Activated naive CD4-positive, alpha-beta T cell treated with anti-CD3 and anti-CD28 coated beads, Interleukin-2, amount 10 ng/mL, durations not matched to agents 7 days and 5 days (primary cell): ENCODE measurements at regions of chr5 and their contacts with region 1.

Region 1: GRCh38 chr5:151164686-151165392 is 7.3 kb upstream of the ANXA6 start:
- DNase-seq: peak; percentile 88
- H3K4me3 Mint-ChIP-seq: no peak overlapping the region
- H3K27ac Mint-ChIP-seq: no peak overlapping the region
- H3K4me1 Mint-ChIP-seq: peaks cover 7% of the 10 kb centered on the region
- H3K27me3 Mint-ChIP-seq: peaks cover 21% of the 10 kb centered on the region

Region 2: DNA sequence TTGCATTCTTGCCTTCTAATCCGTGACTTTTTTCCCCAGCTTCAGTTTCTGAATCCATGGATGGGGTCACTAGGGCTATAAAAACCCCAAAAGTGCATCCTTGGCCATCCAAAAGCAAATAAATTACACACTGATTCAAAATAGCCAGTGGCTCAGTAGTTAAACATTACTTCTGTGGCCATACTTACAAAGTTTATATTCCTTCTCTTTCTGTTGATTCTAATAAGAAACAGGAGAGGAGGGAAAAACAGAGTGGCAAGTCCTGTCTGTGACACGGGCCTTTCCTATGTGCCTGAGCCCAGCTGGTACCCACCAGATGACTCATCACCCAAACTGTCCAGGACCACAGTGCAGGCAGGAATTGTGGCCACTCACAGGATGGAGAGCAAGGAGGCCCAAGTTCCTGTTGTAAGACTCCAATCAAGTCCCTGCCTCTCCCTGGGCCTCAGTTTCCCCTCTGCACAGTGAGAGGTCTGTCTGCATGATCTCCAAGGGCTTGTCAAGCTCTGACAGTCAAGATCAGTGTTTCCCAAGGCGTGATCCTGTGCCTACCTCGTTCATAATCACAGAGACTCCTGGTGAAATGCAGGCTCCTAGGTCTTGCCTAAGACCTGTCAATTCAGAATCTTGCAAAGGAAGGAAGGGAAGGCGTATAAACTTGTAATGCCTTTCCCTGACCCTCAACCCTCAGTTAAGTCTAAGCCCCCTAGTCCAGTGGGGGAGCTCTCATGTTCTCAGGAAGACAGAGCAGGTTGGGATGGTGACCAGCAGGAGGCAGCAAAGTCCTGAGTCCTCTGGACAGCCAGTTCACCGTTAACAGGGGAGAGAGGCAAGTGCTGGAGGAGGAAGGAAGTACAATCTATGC is 113.5 kb before region 1 on chr5:
- CTCF ChIA-PET with region 1: interaction called, 85 read pairs
- DNase-seq: peak; percentile 82
- H3K4me3 Mint-ChIP-seq: no peak overlapping the region
- H3K27ac Mint-ChIP-seq: peak overlapping the region; percentile 17
- H3K4me1 Mint-ChIP-seq: peaks cover 7% of the 10 kb centered on the region
- H3K27me3 Mint-ChIP-seq: no peaks in the 10 kb centered on the region

Region 3: DNA sequence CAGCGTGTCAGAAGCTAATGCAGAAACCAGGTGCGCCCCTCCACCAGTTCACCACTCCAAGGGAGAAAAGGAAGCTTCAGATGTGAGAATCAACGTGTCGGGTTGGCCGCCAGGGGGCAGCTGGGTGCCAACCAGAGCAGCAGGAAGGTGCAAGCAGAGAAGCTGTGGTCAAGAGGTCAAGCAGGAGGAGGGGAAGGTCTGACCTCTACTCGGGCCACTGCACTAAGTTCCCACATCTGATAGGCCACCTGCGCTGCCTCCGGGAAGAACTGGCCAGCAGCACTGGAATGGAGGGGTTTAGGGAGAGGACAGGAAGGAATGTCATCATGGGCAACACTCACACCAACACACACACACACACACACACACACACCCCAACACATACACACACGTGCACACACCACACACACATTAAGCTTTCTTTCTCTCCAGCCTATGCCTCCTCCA is 38.6 kb before region 1 on chr5:
- CTCF ChIA-PET with region 1: interaction called, 366 read pairs
- DNase-seq: peak; percentile 71
- H3K4me3 Mint-ChIP-seq: no peak overlapping the region
- H3K27ac Mint-ChIP-seq: peak overlapping the region; percentile 84
- H3K4me1 Mint-ChIP-seq: peaks cover 42% of the 10 kb centered on the region
- H3K27me3 Mint-ChIP-seq: no peaks in the 10 kb centered on the region

Region 4: DNA sequence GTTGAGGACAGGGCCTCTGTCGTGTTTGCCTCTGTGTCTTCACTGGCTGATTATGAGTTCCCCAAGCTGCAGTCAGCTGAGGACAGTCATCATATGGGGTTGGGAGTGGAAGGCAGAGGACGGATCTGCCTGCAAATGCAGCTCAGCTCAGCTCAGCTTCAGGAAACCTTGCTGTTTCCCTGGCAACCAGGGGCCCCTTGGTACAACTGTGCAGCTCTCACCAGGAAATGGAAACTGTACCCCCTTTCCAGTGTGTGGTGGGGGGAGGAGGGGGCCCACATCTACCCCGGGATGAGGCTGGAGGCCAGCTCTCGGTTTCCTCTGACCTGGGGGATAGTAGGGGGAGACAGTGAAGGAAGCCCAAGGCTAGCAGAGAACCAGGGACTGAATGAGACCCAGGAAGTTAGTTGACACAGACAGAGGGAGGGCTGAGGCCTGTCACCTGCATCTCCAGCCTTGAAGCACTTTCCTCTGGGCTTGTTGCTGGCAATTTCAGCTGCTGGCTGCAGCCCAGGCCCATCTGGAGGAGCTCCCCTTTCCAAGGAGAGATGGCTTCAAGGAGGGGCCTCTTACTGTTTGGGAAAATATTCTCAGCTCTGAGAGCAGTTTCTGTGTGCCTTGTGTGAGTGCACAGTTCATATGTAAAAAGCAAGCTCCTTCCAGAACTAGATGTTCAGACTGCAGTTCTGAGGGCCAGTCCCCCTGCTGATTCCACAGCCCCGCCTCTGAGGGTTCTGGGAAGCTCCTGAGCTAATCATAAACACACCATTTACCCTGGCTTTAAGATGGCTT is 14.2 kb before region 1 on chr5:
- CTCF ChIA-PET with region 1: interaction called, 46 read pairs
- DNase-seq: peak; percentile 87
- H3K4me3 Mint-ChIP-seq: peak overlapping the region; percentile 57
- H3K27ac Mint-ChIP-seq: peak overlapping the region; percentile 94
- H3K4me1 Mint-ChIP-seq: peaks cover 100% of the 10 kb centered on the region
- H3K27me3 Mint-ChIP-seq: no peaks in the 10 kb centered on the region

Region 5: DNA sequence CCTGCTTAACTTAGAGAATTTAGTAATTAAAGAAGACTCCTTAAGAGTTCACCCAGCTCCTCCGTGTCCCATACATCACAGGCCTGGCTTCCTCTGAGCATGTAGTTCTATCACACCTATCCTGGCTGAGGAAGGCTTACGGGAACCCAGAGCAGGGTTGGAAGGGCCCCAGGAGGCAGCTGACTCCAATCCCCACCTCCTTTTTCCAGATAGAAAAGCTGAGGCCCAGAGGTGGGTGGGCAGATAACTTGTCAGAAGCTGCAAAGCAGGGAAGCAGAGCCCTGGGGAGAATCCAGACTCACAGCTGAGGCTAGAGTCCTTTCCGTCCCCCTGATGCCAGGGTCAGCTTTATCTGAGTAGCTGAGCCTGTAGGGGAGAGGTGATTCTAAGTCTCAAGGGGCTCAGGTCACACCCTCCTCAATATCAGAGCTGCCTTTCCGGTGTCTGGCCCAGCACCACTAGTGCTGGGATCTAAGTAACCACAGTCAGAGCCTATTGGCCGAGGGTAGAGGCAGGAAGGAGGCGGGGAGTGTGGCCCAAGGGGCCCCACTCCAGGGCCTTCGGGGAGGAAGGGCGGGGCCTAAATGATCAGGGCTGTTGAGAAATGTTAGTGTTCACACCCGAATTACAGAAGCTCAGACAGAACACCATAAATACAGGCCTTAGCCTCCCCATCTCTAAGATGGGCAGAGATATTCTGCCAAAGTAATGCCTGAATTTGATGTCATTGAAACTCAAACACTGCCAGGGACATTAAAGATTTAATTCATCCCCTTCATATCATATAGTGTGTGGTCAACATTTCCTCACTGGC is 49.2 kb after region 1 on chr5:
- CTCF ChIA-PET with region 1: interaction called, 22 read pairs
- DNase-seq: peak; percentile 94
- H3K4me3 Mint-ChIP-seq: peak overlapping the region; percentile 81
- H3K27ac Mint-ChIP-seq: peak overlapping the region; percentile 99
- H3K4me1 Mint-ChIP-seq: peaks cover 87% of the 10 kb centered on the region
- H3K27me3 Mint-ChIP-seq: no peaks in the 10 kb centered on the region